Activated CD4-positive, alpha-beta T cell treated with anti-CD3 and anti-CD28 coated beads, Interleukin-2, amount 10 ng/mL, durations not matched to agents 24 days and 14 days (primary cell): ENCODE measurements at regions of chr11 and their contacts with region 1.

Region 1: DNA sequence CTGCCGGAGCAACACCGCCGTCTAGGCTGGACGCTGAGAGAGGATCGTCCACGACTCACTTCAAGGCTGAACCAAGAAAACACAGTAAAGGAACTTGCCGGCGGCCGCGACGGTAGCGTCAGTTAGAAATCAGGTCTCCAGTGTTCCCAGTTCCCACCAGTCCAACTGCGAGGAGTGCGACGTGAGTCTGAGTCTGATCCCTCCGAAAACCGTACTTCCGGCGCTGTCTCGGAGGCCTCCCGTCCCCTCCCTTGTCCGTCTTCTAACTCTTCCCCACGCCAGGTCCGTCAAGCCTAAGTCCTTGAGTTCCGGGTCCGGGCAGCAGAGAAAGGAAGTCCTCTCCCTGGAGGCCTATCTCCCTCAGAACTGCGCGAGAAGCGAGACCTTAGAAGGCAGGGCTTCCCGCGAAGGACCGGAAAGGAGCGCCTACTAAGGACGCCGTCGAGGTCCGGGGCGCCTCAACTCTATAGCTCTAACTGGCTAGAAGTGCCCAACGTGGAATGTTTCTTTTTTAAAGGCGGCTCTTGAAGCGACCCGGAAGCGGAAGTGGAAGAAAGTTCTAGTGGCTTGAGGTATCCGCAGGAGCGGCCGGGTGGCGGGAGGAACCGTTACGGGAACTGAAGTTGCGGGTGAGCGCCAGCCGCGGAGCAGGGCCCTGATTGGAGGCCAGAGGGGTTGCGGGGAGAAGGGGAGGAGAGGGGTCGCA is at the starts of genes BANF1 and EIF1AD:
- DNase-seq: peak; percentile 98
- H3K4me3 Mint-ChIP-seq: peak within 1 kb of the TSS; percentile 100
- H3K27ac Mint-ChIP-seq: peak within 1 kb of the TSS; percentile 99
- H3K4me1 Mint-ChIP-seq: peaks cover 28% of the 10 kb centered on the region
- H3K27me3 Mint-ChIP-seq: no peaks in the 10 kb centered on the region
- total RNA-seq, gene BANF1: 291 and 298 TPM in 2 replicates
- total RNA-seq, gene EIF1AD: 64.9 and 75.9 TPM in 2 replicates

Region 2: DNA sequence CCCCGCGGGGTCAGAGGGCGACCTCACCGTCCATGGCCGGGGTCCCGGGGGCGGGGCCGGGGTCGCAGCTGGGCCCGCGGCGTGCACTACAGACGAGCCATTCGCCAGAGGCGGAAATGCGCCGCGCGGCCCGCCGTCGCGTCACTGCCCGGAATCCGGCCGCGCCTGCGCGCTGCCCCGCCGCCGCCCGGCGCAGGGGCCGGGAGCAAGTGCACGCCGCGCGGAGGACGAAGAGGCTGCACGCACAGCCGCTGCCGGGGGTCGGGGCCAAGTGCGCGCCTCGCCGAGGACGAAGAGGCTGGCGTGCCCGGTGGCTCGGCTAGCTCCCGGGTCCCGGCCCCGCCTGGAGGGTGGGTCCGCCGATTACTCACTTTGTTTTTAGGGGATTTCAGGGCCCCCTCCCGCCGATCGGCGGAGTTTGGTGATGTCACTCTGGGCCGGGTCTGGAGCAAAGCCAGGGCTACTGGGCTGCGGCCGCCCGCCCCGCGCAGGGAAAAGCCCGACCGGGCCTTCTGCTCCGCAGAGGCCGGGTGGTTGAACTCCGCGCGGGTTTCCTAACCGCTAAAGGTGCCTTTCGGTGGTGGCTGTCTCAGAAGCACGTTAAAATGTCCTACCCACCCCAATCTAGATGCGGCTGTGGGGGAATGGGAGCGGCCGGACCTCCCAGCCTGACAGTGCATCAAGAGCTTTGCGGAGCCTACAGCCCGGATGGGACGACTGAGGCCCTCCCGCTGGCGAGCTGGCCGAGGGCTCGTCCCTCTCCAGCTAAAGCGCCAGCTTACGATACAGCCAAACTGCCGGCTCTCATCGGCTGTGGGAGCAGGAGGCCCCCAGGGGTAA is 339.1 kb before region 1 on chr11 and contains the start of gene RELA:
- intact Hi-C with region 1: loop called (anchors 1 kb)
- DNase-seq: peak; percentile 97
- H3K4me3 Mint-ChIP-seq: peak within 1 kb of the TSS; percentile 92
- H3K27ac Mint-ChIP-seq: peak within 1 kb of the TSS; percentile 93
- H3K4me1 Mint-ChIP-seq: peaks cover 24% of the 10 kb centered on the region
- H3K27me3 Mint-ChIP-seq: no peaks in the 10 kb centered on the region
- total RNA-seq, gene RELA: 95.7 and 98.2 TPM in 2 replicates

Region 3: GRCh38 chr11:65900125-65900898 is 101.8 kb before region 1 on chr11 and contains the start of gene FOSL1:
- intact Hi-C with region 1: loop called (anchors 1 kb)
- DNase-seq: peak; percentile 97
- H3K4me3 Mint-ChIP-seq: peak within 1 kb of the TSS; percentile 82
- H3K27ac Mint-ChIP-seq: peak within 1 kb of the TSS; percentile 78
- H3K4me1 Mint-ChIP-seq: peaks cover 37% of the 10 kb centered on the region
- H3K27me3 Mint-ChIP-seq: peaks cover 10% of the 10 kb centered on the region
- total RNA-seq, gene FOSL1: 32.1 and 32.9 TPM in 2 replicates

Region 4: DNA sequence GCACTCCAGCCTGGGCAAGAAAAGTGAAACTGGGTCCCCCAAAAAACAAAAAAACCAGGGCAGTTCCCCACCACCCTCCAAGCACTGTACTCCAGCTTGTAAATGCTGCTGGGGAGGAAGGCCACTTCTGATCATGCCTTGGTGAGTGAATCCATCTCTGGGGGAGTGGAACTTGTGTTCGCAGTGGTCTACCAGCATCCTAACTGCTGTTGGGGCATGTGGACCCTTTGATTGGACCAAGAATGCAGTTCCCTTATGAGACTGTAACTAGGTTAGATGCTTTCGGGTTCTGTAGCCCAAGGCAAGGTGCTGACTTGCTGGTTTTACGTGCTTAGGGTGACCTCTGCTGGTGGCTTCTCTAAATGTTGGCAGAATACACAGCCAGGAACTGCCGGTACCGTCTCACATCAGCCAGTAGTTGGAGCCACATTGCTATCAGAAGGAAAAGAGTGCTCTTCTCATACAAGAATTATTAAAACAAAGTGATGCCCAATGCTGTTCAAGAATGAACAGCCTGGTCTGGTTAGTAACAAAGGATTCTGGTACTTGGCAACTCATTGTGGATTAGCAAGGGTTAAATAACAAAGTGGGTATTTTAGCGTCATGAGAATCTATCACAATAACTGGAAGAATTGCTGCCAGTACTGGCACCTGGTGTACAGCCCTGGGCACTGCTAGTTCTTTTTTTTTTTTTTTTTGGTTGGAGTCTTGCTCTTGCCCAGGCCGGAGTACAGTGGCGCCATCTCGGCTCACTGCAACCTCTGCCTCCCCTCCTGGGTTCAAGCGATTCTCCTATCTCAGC is 13.1 kb before region 1 on chr11:
- intact Hi-C with region 1: loop called (anchors 1 kb)
- DNase-seq: peak; percentile 98
- H3K4me3 Mint-ChIP-seq: no peak overlapping the region
- H3K27ac Mint-ChIP-seq: peak overlapping the region; percentile 80
- H3K4me1 Mint-ChIP-seq: peaks cover 6% of the 10 kb centered on the region
- H3K27me3 Mint-ChIP-seq: no peaks in the 10 kb centered on the region

Region 5: DNA sequence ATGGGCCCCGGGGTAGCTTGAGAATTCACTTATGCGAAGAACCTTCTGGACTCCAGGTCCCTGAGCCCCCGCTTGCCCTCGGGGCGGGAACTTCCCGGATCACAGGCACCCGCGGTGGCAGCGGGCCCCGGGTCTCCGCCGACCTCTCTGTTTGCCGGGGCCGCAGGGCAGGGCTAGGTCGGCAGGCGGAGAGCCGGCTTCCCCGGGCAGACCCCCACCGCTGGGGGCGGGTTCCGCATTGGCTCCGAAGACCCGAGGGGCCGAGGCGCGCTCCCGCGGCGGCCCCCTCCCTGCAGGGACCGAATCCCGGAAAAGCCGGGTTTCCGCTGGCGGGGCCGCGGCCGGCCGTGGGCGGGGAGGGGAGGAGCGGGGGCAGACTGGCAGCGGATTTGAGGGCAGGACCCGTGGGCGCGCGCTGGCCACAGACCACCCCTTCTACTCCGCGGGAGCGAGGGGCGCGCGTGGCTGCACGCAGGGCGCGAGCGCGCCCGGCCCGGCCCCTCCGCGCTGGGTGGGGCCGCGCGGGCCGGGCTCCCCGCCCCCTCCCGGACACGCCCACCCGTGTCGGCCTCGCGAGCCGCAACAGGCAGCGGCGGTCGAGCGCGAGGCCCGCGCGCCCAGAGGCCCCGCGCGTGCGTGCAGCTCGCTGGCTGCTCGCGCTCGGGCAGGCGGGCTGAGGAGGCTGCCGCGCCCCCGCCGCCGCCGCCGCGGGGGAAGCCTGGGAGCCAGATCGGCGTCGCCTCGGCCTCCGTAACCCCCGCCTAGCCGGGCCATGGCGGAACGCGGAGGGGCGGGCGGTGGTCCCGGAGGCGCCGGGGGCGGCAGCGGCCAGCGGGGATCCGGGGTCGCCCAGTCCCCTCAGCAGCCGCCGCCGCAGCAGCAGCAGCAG is 67.9 kb after region 1 on chr11 and contains the start of gene PACS1:
- intact Hi-C with region 1: no loop called
- DNase-seq: peak; percentile 95
- H3K4me3 Mint-ChIP-seq: peak within 1 kb of the TSS; percentile 94
- H3K27ac Mint-ChIP-seq: peak within 1 kb of the TSS; percentile 92
- H3K4me1 Mint-ChIP-seq: peaks cover 53% of the 10 kb centered on the region
- H3K27me3 Mint-ChIP-seq: no peaks in the 10 kb centered on the region
- total RNA-seq, gene PACS1: 90.9 and 96.7 TPM in 2 replicates

Region 6: DNA sequence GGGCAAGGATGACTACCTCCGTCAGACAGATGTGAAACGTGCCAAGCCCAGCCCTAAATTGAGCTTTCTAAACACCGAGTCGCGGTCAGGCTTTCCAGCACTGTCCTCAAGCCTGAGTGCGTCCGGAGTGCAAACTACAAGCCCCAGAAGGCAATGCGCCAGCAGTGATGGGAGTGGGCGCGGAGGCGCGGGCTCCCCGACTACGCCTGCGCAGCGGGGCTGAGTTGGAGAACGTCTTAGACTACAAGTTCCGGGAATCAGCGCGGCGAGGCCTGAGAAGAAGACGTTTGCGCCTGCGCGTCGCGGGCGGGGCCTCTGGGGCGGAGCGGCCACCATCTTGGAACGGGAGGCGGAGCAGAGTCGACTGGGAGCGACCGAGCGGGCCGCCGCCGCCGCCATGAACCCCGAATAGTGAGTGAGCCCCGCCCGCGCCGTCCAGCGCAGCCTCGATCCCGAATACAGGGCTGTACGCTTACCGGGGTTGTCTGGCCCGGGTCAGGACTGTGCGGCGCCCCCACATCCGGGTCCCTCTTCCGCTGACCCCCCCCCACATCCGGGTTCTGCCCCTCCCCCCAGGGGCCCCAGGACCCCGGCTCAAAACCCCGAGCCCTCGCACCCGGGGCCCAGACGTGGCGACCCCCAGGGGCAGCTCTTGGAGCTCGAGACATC is 266.3 kb after region 1 on chr11 and contains the start of gene RAB1B:
- intact Hi-C with region 1: loop called (anchors 5 kb)
- DNase-seq: peak; percentile 100
- H3K4me3 Mint-ChIP-seq: peak within 1 kb of the TSS; percentile 99
- H3K27ac Mint-ChIP-seq: peak within 1 kb of the TSS; percentile 98
- H3K4me1 Mint-ChIP-seq: peaks cover 27% of the 10 kb centered on the region
- H3K27me3 Mint-ChIP-seq: peaks cover 4% of the 10 kb centered on the region
- total RNA-seq, gene RAB1B: 117 and 123 TPM in 2 replicates